Naive thymus-derived CD4-positive, alpha-beta T cell (primary cell): ENCODE measurements at regions of chr19 and their contacts with region 1.

Region 1: GRCh38 chr19:32224371-32225244 is 120.8 kb upstream of the ZNF507 start:
- DNase-seq: peak in 8 of 9 donors; percentile 19 to 80 (median 53)
- ATAC-seq: peak; percentile 85
- H3K4me3 ChIP-seq: peak overlapping the region; percentile 17
- H3K4me3 Mint-ChIP-seq: peak overlapping the region; percentile 68 to 86 (median 79)
- H3K27ac ChIP-seq: no peak overlapping the region
- H3K27ac Mint-ChIP-seq: no peak overlapping the region
- H3K4me1 ChIP-seq: peaks cover 5 to 7% of the 10 kb centered on the region in 2 donors
- H3K4me1 Mint-ChIP-seq: peaks cover 10 to 17% (median 15%) of the 10 kb centered on the region in 7 donors
- H3K27me3 ChIP-seq: peaks cover 0 to 10% of the 10 kb centered on the region in 2 donors
- H3K27me3 Mint-ChIP-seq: peaks cover 43 to 65% (median 58%) of the 10 kb centered on the region in 5 donors

Region 2: DNA sequence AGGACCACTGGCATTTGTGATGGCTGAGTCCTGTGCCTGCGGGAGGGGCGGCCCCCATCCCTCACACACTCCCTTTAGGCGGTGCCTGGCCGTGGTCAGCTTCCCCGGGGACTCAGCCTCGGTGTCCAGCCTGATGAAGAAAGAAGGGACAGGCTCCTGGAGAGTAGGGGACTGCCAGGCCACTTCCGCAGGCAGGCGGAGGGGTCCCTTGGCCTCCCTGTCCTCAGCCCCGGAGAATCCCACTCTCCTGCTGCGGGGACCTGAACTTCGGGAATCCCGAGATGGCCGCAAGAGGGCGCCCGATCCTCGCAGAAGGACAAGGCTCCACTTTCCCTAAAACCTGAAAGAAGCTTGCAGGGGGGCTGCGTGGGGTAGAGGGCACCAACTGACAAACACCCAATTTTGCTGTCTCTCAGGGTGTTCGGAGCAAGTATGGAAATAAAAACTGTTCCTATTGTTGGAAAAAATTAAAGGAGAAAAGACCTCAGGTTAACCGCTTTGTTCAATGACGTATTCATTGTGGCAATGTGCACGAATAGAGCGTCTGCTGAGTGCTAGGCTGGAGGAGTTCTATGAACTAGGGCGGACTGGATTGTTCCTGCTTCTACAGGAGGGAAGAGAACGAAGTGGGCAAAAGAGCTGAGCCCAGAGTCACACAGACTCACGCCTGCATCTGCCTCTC is 1555.1 kb before region 1 on chr19:
- CTCF ChIA-PET with region 1: interaction called, 17 read pairs
- POLR2A ChIA-PET with region 1: no interaction called
- intact Hi-C with region 1: loop called (anchors 1 to 2 kb)
- DNase-seq: peak; percentile 1 to 55 (median 18)
- ATAC-seq: peak; percentile 31
- H3K4me3 ChIP-seq: no peak overlapping the region
- H3K4me3 Mint-ChIP-seq: no peak overlapping the region
- H3K27ac ChIP-seq: no peak overlapping the region
- H3K27ac Mint-ChIP-seq: no peak overlapping the region
- H3K4me1 ChIP-seq: no peaks in the 10 kb centered on the region
- H3K4me1 Mint-ChIP-seq: no peaks in the 10 kb centered on the region
- H3K27me3 ChIP-seq: no peaks in the 10 kb centered on the region
- H3K27me3 Mint-ChIP-seq: peaks cover 0 to 52% (median 34%) of the 10 kb centered on the region in 5 donors

Region 3: GRCh38 chr19:30682999-30683536 is 1541.5 kb before region 1 on chr19:
- CTCF ChIA-PET with region 1: interaction called, 14 read pairs
- POLR2A ChIA-PET with region 1: no interaction called
- intact Hi-C with region 1: loop called (anchors 1 to 5 kb)
- DNase-seq: peak in 8 of 9 donors; percentile 18 to 51 (median 26)
- ATAC-seq: peak; percentile 66
- H3K4me3 ChIP-seq: no peak overlapping the region
- H3K4me3 Mint-ChIP-seq: no peak overlapping the region
- H3K27ac ChIP-seq: no peak overlapping the region
- H3K27ac Mint-ChIP-seq: no peak overlapping the region
- H3K4me1 ChIP-seq: no peaks in the 10 kb centered on the region
- H3K4me1 Mint-ChIP-seq: no peaks in the 10 kb centered on the region
- H3K27me3 ChIP-seq: no peaks in the 10 kb centered on the region
- H3K27me3 Mint-ChIP-seq: peaks cover 12 to 65% (median 43%) of the 10 kb centered on the region in 5 donors

Region 4: GRCh38 chr19:30784850-30785457 is 1439.7 kb before region 1 on chr19:
- CTCF ChIA-PET with region 1: interaction called, 16 read pairs
- POLR2A ChIA-PET with region 1: no interaction called
- intact Hi-C with region 1: loop called in 1 of 2 experiments (anchors 1 kb)
- DNase-seq: peak; percentile 15 to 61 (median 37)
- ATAC-seq: peak; percentile 69
- H3K4me3 ChIP-seq: no peak overlapping the region
- H3K4me3 Mint-ChIP-seq: no peak overlapping the region
- H3K27ac ChIP-seq: no peak overlapping the region
- H3K27ac Mint-ChIP-seq: no peak overlapping the region
- H3K4me1 ChIP-seq: no peaks in the 10 kb centered on the region
- H3K4me1 Mint-ChIP-seq: peaks cover 0 to 3% (median 0%) of the 10 kb centered on the region in 7 donors
- H3K27me3 ChIP-seq: no peaks in the 10 kb centered on the region
- H3K27me3 Mint-ChIP-seq: peaks cover 0 to 34% (median 10%) of the 10 kb centered on the region in 5 donors

Region 5: GRCh38 chr19:31054430-31054829 is 1170.2 kb before region 1 on chr19:
- CTCF ChIA-PET with region 1: interaction called, 3 read pairs
- POLR2A ChIA-PET with region 1: no interaction called
- intact Hi-C with region 1: loop called in 1 of 2 experiments (anchors 10 kb)
- DNase-seq: peak in 1 of 9 donors; percentile 25
- ATAC-seq: peak; percentile 68
- H3K4me3 ChIP-seq: no peak overlapping the region
- H3K4me3 Mint-ChIP-seq: no peak overlapping the region
- H3K27ac ChIP-seq: no peak overlapping the region
- H3K27ac Mint-ChIP-seq: no peak overlapping the region
- H3K4me1 ChIP-seq: no peaks in the 10 kb centered on the region
- H3K4me1 Mint-ChIP-seq: no peaks in the 10 kb centered on the region
- H3K27me3 ChIP-seq: no peaks in the 10 kb centered on the region
- H3K27me3 Mint-ChIP-seq: peaks cover 0 to 47% (median 23%) of the 10 kb centered on the region in 5 donors